Upper lobe of right lung (tissue), 1 donor: ENCODE measurements at regions of chr12 and their contacts with region 1.

Region 1: DNA sequence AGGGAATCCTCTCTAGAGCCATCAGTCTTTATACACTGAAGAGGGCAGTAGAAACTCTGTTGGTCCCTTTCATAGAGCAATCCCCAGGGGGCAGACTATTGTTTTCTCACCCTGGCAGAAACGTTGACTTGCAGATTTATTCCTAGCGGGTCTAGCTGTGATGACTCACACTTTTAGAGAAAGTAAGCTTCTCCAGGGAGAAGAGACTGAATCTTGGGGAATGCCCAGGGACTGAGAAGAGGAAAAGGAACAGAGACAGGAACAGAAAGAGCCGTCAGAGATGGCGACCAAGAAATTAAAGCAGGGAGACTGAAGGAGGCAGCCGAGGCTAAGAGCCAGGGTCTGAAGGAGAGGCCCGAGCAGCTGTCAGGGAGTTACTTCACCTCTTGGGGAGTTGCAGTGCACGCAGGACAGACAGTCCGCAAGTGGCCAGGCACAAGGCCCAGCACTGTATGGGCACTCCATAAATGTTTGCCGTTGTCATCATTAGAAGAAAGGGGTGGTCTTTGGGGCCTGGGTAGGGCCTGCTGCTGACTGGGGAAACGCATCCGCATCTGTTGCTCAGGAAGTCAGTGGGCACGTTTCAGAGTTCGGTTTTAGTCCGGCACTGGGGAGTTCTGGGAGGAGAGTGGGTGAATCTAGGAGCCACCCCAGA is 13.0 kb downstream of the PLEKHG6 start:
- DNase-seq: no peak
- ATAC-seq: peak; percentile 69
- H3K4me3 ChIP-seq: peak overlapping the region; percentile 14
- H3K27ac ChIP-seq: peak overlapping the region; percentile 86
- H3K4me1 ChIP-seq: peaks cover 59% of the 10 kb centered on the region
- H3K27me3 ChIP-seq: no peaks in the 10 kb centered on the region
- CTCF ChIP-seq: peak; percentile 59

Region 2: GRCh38 chr12:6465467-6466183 is 142.2 kb after region 1 on chr12:
- intact Hi-C with region 1: loop called (anchors 10 kb)
- DNase-seq: no peak
- ATAC-seq: peak; percentile 67
- H3K4me3 ChIP-seq: no peak overlapping the region
- H3K27ac ChIP-seq: no peak overlapping the region
- H3K4me1 ChIP-seq: peaks cover 41% of the 10 kb centered on the region
- H3K27me3 ChIP-seq: no peaks in the 10 kb centered on the region
- CTCF ChIP-seq: peak; percentile 82